ENCODE measurements at regions of chr7 and their contacts with region 1.

Region 1: GRCh38 chr7:17940302-17940883 is at the start of gene SNX13:
- DNase-seq: peak; percentile 95
- ATAC-seq: peak; percentile 90
- H3K4me3 ChIP-seq: peak within 1 kb of the TSS; percentile 81 to 96 (median 95)
- H3K4me3 Mint-ChIP-seq: peak within 1 kb of the TSS; percentile 98
- H3K27ac ChIP-seq: peak within 1 kb of the TSS; percentile 97
- H3K27ac Mint-ChIP-seq: peak within 1 kb of the TSS; percentile 99
- H3K4me1 ChIP-seq: peaks cover 14 to 22% of the 10 kb centered on the region in 2 donors
- H3K4me1 Mint-ChIP-seq: peaks cover 38% of the 10 kb centered on the region
- H3K27me3 ChIP-seq: no peaks in the 10 kb centered on the region
- H3K27me3 Mint-ChIP-seq: no peaks in the 10 kb centered on the region
- CTCF ChIP-seq: no peak
- total RNA-seq, gene SNX13: 58.1 and 62.6 TPM in 2 replicates

Region 2: DNA sequence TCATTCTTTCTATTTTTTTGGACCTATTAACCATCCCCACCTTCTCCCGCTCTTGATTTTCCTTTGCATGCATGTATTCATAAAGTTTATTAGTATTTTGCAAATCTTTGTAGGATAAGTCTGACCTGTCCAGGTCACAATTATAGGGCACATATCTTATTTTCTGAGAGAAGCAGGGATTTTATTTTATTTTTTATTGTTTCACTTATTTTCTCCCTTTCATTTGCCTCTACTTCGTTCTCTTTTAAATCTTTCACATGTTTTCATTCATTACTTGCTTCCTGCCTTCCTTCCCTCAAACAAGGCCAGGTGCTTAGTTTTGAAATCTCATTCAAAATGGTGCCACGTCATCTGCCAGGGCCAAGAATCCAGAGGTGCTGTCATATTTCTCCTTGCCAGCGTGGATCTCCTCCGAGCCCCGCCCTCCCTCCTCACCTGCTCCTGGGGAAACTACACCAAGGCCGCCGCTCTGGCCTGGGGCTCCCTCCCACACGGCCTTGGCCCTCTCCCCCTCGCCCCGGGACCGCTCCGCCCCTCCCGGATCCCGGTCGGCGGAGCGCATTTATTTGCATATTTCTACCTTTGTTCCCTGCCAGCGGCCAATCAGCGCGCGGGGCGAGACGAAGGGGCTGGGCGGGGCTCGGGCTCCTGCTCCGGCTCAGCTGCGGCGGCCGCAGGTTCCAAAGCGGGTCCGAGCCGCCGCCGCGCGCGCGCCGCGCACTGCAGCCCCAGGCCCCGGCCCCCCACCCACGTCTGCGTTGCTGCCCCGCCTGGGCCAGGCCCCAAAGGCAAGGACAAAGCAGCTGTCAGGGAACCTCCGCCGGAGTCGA is 1187.1 kb before region 1 on chr7 and contains the start of gene TSPAN13:
- CTCF ChIA-PET with region 1: no interaction called
- POLR2A ChIA-PET with region 1: no interaction called
- intact Hi-C with region 1: loop called (anchors 5 kb)
- DNase-seq: peak; percentile 87
- ATAC-seq: peak; percentile 86
- H3K4me3 ChIP-seq: peak within 1 kb of the TSS; percentile 80 to 92 (median 86)
- H3K4me3 Mint-ChIP-seq: peak within 1 kb of the TSS; percentile 100
- H3K27ac ChIP-seq: peak within 1 kb of the TSS; percentile 58 to 71
- H3K27ac Mint-ChIP-seq: peak within 1 kb of the TSS; percentile 96
- H3K4me1 ChIP-seq: peaks cover 29% of the 10 kb centered on the region in 2 donors
- H3K4me1 Mint-ChIP-seq: peaks cover 36% of the 10 kb centered on the region
- H3K27me3 ChIP-seq: no peaks in the 10 kb centered on the region
- H3K27me3 Mint-ChIP-seq: no peaks in the 10 kb centered on the region
- CTCF ChIP-seq: no peak
- total RNA-seq, gene TSPAN13: 26.2 and 26.3 TPM in 2 replicates

Measured in B cell (primary cell).